ENCODE measurements at regions of chr3 and their contacts with region 1.

Region 1: GRCh38 chr3:178318941-178319816 is 217.1 kb upstream of the KCNMB2 start:
- DNase-seq: no peak

Region 2: DNA sequence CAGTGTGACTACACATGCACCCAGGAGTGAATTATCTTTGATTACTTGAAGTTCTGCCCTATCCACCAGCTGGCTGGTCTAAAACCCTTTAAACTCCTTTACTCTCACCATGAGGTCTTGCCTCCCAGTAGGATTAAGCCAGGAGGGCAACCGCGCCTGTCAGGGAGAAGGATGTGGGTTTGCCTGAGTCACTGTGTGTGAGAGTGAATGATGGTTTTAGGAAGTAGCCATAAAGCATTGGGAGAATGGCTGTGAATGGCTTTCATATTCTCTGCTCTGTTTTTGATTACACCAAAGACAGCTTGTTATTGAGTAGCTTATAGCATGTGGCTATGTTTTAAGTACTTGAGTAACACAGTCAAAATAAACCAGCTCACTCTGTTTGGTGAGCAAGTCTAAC is 484.2 kb before region 1 on chr3:
- intact Hi-C with region 1: loop called (anchors 10 kb)
- DNase-seq: no peak

Region 3: DNA sequence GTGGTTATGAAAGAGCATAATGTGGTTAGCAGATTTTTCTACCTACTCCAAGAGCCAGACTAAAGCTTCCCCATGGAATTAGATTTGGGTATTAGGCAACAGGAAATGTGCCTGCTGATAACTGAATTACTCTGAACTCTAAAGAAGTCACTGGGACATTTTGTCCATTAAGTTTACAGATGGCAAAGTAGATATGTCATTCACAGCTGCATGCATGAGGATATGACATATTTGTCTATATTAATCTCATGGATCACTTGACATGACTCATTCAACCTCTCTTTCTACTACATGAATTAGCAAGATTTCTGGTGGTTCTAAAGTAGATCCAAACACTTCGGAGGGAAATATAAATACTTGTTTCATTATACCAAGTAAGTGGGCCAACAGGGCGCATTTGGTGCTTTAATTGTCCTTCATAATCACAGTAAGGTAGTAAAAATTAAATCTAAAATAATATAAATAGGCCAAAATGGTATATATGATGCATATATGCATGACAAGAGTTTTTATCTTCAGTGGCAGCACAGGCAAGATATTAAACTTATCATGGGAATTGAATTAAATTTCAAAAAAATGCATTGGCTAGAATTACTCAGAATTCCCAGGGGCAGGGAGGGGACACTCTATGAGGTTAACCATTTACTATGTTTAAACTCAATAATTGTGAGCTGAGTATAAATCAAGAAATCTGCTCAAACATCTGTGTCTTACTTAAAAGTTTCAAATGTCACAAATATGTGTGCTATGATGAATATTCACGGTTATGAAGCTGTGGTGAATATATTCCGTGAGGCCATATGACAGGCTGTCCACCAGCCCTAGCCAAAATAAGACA is 148.3 kb before region 1 on chr3:
- intact Hi-C with region 1: loop called (anchors 10 kb)
- DNase-seq: no peak

Region 4: DNA sequence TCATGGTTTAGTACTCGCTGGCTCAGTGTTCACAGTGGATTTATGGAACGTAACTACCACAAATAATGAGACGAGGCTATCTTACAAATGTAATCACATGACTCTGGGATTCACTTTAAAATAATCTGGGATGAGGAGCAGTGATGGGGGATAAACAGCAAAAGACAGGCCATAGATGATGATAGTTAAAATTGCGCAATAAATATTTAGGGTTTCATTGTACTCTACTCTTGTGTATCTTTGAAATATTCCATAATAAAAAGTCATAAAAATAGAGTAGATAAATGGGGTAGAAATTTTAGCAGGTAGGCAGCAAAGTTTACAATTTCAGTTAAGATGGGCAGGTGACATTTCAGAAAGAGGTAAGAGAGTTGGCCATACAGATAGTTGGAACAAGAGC is 413.6 kb after region 1 on chr3:
- intact Hi-C with region 1: no loop called
- DNase-seq: no peak

Measured in cardiac septum (tissue), 1 donor.